ENCODE measurements at regions of chrX and their contacts with region 1.

Region 1: DNA sequence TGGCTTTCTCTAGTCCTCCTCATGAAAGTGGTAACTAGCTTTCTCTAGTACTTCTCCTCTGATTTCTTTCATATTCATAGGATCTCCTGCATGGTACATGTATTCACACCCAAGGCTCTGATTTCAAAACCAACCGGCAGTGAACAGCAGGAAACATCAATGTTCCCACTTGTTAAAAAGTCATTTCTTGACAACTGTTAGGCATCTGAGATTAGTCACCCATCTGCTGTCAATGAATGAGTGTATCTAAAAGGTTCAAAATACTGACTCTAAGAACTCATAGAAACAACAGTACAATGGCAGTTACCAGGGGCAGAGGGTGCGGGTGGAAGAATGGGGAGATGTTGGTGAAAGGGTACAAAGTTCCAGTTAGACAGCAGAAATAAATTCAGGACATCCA is 31.5 kb upstream of the PUDP start:
- DNase-seq: no peak
- ATAC-seq: no peak
- H3K4me3 ChIP-seq: no peak overlapping the region
- H3K27ac ChIP-seq: no peak overlapping the region
- H3K4me1 ChIP-seq: no peaks in the 10 kb centered on the region
- H3K27me3 ChIP-seq: no peaks in the 10 kb centered on the region
- CTCF ChIP-seq: no peak
- EP300 ChIP-seq: no peak
- POLR2A ChIP-seq: no peak
- RAD21 ChIP-seq: no peak

Region 2: GRCh38 chrX:7191681-7192110 is 12.2 kb after region 1 on chrX:
- CTCF ChIA-PET with region 1: interaction called, 10 read pairs
- POLR2A ChIA-PET with region 1: interaction called, 3 read pairs
- RAD21 ChIA-PET with region 1: no interaction called
- SMC1A ChIA-PET with region 1: interaction called, 3 read pairs
- in situ Hi-C with region 1: no loop called
- intact Hi-C with region 1: no loop called
- DNase-seq: no peak
- ATAC-seq: peak; percentile 81
- H3K4me3 ChIP-seq: no peak overlapping the region
- H3K27ac ChIP-seq: no peak overlapping the region
- H3K4me1 ChIP-seq: no peaks in the 10 kb centered on the region
- H3K27me3 ChIP-seq: no peaks in the 10 kb centered on the region
- CTCF ChIP-seq: peak; percentile 19 to 41 (median 29); a peak in 4 of 6 replicates
- EP300 ChIP-seq: no peak
- POLR2A ChIP-seq: no peak
- RAD21 ChIP-seq: peak; percentile 53

Region 3: DNA sequence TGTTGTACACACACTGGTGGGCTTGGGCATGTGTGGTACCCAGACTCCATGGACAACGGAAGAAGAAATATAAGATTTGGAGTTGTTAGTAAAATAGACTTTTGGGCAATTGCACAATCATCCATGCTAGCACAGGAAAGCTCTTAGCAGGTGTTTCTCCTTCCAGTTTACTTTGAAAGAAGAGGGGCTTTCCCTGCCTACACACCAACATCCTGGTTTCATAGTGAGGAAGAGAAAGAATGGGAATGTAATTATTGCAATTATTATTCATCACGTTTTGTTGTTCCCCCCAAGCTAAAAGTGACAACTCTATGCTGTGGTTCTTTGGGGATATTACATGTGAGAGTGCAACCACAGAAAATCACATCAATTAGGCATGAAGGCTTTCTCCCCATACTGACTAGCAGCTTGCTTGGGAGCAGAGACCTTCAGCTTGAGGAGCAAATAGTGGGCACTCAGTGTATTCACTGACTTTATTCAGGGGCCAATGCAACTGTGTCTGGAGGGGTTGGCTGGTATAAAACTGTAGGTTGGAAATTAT is 25.7 kb after region 1 on chrX:
- CTCF ChIA-PET with region 1: no interaction called
- POLR2A ChIA-PET with region 1: no interaction called
- RAD21 ChIA-PET with region 1: no interaction called
- SMC1A ChIA-PET with region 1: no interaction called
- in situ Hi-C with region 1: no loop called
- intact Hi-C with region 1: no loop called
- DNase-seq: peak; percentile 8
- ATAC-seq: peak; percentile 93
- H3K4me3 ChIP-seq: no peak overlapping the region
- H3K27ac ChIP-seq: no peak overlapping the region
- H3K4me1 ChIP-seq: peaks cover 4% of the 10 kb centered on the region
- H3K27me3 ChIP-seq: no peaks in the 10 kb centered on the region
- CTCF ChIP-seq: no peak
- EP300 ChIP-seq: 0 out of 4 replicates have a peak, but pooled peaks of 1 of the 2 experiments have one; percentile 17
- POLR2A ChIP-seq: no peak
- RAD21 ChIP-seq: no peak

Measured in GM12878 (cell line).